GM13976 (cell line): ENCODE measurements at regions of chr6 and their contacts with region 1.

Region 1: GRCh38 chr6:3732345-3733141 is 19.0 kb downstream of the PXDC1 start:
- DNase-seq: peak; percentile 79
- CTCF ChIP-seq: peak; percentile 86

Region 2: GRCh38 chr6:3251462-3252314 is 480.9 kb before region 1 on chr6:
- in situ Hi-C with region 1: no loop called
- DNase-seq: peak; percentile 88
- CTCF ChIP-seq: peak; percentile 89

Region 3: DNA sequence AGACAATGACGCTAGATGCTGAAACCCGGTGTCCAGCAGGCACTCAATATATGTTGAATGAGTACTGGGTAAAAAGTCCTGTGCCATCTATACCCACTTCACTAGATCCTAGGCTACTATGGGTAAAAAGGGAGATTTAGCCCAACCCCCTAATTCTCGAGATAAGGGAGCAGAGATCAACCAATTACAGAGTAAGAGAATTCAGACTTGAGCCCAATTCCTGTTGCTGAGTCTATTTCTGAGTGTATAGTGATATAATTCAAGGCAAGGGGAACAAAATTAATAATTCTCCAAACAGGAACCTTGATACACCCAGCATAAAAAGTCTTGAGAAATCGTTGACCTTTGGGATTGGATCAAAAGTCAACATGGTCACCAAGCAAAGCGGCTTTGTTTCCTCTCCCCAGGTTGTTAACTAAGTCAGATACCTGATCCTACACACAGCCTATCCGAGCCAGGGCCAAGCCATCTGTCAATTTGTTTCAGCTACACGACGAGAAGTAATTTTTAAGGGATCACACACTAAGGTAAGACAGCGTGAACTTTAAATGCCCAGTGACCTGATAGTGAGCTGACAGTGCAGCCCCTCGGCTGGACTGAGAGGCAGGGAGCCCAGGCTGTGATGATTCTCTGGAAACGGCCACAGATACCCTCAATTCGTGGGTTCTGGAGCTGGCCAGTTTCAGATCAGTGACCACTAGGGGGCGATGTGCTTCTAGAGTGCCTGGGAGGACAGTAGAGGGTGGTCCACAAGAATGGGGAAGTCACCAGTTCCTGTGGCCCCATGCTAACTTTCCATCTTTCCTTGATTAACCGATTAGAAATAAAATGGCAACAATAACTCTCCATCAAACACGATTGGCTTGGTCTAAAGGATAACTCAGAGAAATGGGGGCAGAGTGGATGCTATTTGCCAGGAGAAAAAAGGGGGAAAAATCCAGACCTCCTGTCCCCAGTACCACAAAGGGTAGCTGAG is 321.9 kb before region 1 on chr6:
- in situ Hi-C with region 1: loop called (anchors 10 kb)
- DNase-seq: peak; percentile 64
- CTCF ChIP-seq: peak; percentile 58